ENCODE measurements at regions of chr9 and their contacts with region 1.

Region 1: DNA sequence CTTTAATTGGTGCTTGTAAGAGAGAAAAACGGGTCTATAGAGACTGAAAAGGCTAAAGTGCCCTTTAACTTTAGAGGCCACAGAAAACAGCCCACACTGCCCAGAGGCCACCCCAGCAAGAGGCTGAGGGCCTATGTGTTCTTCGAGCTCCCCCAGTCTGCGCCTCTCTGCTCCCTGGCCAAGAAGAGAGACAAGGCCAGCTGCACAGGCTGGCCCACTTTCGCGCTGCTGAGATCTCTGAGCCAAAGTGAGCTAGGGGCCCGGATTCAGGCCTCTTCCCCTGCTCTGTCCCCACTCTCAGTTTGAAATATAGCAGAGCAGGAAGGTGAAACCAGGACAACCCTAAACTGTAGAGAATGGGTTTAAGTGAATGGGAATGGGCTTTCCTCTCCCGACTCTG is 132.0 kb upstream of the TRIM32 start:
- DNase-seq: no peak
- H3K4me3 Mint-ChIP-seq: no peak overlapping the region
- H3K27ac Mint-ChIP-seq: no peak overlapping the region
- H3K4me1 Mint-ChIP-seq: no peaks in the 10 kb centered on the region
- H3K27me3 Mint-ChIP-seq: no peaks in the 10 kb centered on the region
- CTCF ChIP-seq: no peak

Region 2: DNA sequence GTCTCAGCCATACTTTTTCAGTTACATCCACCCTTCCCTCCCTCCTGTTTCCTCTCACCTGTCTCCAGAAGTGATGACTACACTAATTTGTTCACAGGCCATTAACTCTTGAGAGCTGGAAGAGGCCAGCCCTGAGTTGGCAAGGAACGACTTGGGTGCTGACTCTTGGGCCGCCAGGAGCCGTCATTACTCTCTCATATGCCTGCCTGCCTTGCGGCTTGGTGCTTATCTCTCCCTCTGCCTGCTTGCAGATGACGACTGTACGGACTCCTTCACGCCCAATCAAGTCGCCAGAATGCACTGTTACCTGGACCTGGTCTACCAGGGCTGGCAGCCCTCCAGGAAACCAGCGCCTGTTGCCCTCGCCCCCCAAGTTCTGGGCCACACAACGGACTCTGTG is 335.4 kb before region 1 on chr9:
- CTCF ChIA-PET with region 1: no interaction called
- intact Hi-C with region 1: no loop called
- DNase-seq: no peak
- H3K4me3 Mint-ChIP-seq: no peak overlapping the region
- H3K27ac Mint-ChIP-seq: no peak overlapping the region
- H3K4me1 Mint-ChIP-seq: no peaks in the 10 kb centered on the region
- H3K27me3 Mint-ChIP-seq: peaks cover 11% of the 10 kb centered on the region
- CTCF ChIP-seq: no peak

Region 3: GRCh38 chr9:116482740-116483139 is 72.4 kb before region 1 on chr9:
- CTCF ChIA-PET with region 1: interaction called, 14 read pairs
- intact Hi-C with region 1: no loop called
- DNase-seq: no peak
- H3K4me3 Mint-ChIP-seq: no peak overlapping the region
- H3K27ac Mint-ChIP-seq: no peak overlapping the region
- H3K4me1 Mint-ChIP-seq: no peaks in the 10 kb centered on the region
- H3K27me3 Mint-ChIP-seq: peaks cover 7% of the 10 kb centered on the region
- CTCF ChIP-seq: no peak

Region 4: GRCh38 chr9:116605904-116606341 is 50.8 kb after region 1 on chr9:
- CTCF ChIA-PET with region 1: no interaction called
- intact Hi-C with region 1: no loop called
- DNase-seq: no peak
- H3K4me3 Mint-ChIP-seq: no peak overlapping the region
- H3K27ac Mint-ChIP-seq: no peak overlapping the region
- H3K4me1 Mint-ChIP-seq: no peaks in the 10 kb centered on the region
- H3K27me3 Mint-ChIP-seq: no peaks in the 10 kb centered on the region
- CTCF ChIP-seq: no peak

Measured in Calu3 (cell line).